A673 (cell line): ENCODE measurements at regions of chr15 and their contacts with region 1.

Region 1: GRCh38 chr15:66931768-66932633 is 133.4 kb upstream of the SMAD3 start:
- DNase-seq: peak; percentile 63
- H3K4me3 ChIP-seq: no peak overlapping the region
- H3K27ac ChIP-seq: peak overlapping the region; percentile 12
- H3K4me1 ChIP-seq: peaks cover 17% of the 10 kb centered on the region
- H3K27me3 ChIP-seq: no peaks in the 10 kb centered on the region
- CTCF ChIP-seq: no peak

Region 2: DNA sequence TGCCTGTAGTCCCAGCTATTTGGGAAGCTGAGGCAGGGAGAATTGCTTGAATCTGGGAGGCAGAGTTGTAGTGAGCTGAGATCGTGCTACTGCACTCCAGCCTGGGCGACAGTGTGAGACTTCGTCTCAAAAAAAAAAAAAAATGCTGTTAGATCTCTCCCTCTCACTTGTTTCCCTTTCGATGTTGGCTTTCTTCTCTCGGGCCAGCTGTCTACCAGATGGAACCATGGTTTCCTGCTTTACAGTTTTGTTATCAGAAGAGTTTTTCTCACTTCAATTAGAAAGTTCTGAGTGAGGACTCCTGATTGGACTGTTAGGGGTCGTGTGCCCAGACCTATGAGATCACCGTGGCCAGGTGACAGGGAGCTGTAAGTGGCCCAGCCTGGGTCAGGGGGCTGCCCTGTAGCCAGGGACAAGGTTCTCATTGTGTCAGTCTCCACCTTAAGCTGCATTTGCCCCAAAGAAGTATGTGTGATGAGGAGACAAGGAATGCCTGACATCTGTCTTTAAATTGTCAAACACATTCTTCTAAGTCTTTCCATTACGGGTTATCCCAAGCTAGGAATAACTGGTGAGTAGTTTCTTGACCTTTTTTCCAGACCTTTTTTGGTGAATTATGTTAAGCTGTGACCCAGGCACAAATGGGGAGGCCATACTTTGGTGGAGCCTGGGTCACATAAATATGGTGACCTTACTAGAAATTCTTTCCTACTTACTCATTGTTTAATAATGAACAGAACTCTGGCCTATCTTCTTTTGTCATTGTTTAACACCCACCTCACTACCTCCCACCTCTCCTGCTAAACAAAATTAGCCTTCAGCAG is 459.6 kb before region 1 on chr15:
- CTCF ChIA-PET with region 1: no interaction called
- POLR2A ChIA-PET with region 1: interaction called, 20 read pairs
- intact Hi-C with region 1: no loop called
- DNase-seq: no peak
- H3K4me3 ChIP-seq: no peak overlapping the region
- H3K27ac ChIP-seq: no peak overlapping the region
- H3K4me1 ChIP-seq: no peaks in the 10 kb centered on the region
- H3K27me3 ChIP-seq: no peaks in the 10 kb centered on the region
- CTCF ChIP-seq: no peak